ENCODE measurements at regions of chr6 and their contacts with region 1.

Region 1: GRCh38 chr6:91523511-91523910 is 936.6 kb upstream of the MAP3K7 start:
- DNase-seq: no peak
- H3K4me3 ChIP-seq: no peak overlapping the region
- H3K27ac ChIP-seq: no peak overlapping the region
- H3K4me1 ChIP-seq: no peaks in the 10 kb centered on the region
- H3K27me3 ChIP-seq: no peaks in the 10 kb centered on the region
- CTCF ChIP-seq: no peak
- POLR2A ChIP-seq: no peak

Region 2: GRCh38 chr6:90604546-90604945 is 919.0 kb before region 1 on chr6:
- CTCF ChIA-PET with region 1: no interaction called
- POLR2A ChIA-PET with region 1: no interaction called
- dilution Hi-C with region 1: no loop called
- intact Hi-C with region 1: loop called (anchors 5 kb)
- DNase-seq: no peak
- H3K4me3 ChIP-seq: no peak overlapping the region
- H3K27ac ChIP-seq: no peak overlapping the region
- H3K4me1 ChIP-seq: no peaks in the 10 kb centered on the region
- H3K27me3 ChIP-seq: peaks cover 14 to 28% of the 10 kb centered on the region in 2 experiments
- CTCF ChIP-seq: no peak
- POLR2A ChIP-seq: no peak

Region 3: GRCh38 chr6:91453224-91453878 is 70.2 kb before region 1 on chr6:
- CTCF ChIA-PET with region 1: no interaction called
- POLR2A ChIA-PET with region 1: no interaction called
- dilution Hi-C with region 1: no loop called
- intact Hi-C with region 1: no loop called
- DNase-seq: no peak
- H3K4me3 ChIP-seq: no peak overlapping the region
- H3K27ac ChIP-seq: no peak overlapping the region
- H3K4me1 ChIP-seq: no peaks in the 10 kb centered on the region
- H3K27me3 ChIP-seq: no peaks in the 10 kb centered on the region
- CTCF ChIP-seq: no peak
- POLR2A ChIP-seq: no peak

Region 4: DNA sequence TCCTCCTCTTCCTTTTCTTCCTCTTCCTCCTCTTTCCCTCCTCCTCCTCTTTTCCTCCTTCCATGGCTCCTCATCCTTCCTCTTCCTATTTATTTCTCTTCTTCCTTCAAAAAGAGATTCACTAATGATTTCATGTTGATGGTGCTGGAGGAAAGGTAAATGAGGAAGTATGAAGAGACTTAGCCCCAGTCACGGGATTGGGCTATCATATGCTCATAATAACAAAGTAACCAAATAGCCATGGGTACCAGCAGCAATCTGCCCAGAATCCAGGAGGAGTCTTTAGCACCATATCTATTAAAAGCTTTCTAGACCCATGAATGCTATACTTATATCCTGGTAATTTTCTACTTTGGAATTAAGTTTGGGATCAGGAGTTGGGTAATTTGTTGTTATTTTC is 25.7 kb before region 1 on chr6:
- CTCF ChIA-PET with region 1: no interaction called
- POLR2A ChIA-PET with region 1: no interaction called
- dilution Hi-C with region 1: no loop called
- intact Hi-C with region 1: no loop called
- DNase-seq: no peak
- H3K4me3 ChIP-seq: no peak overlapping the region
- H3K27ac ChIP-seq: no peak overlapping the region
- H3K4me1 ChIP-seq: no peaks in the 10 kb centered on the region
- H3K27me3 ChIP-seq: no peaks in the 10 kb centered on the region
- CTCF ChIP-seq: no peak
- POLR2A ChIP-seq: no peak

Measured in endothelial cell of umbilical vein (primary cell).